Posterior cingulate gyrus (tissue), 11 donors: ENCODE measurements at regions of chr12 and their contacts with region 1.

Region 1: GRCh38 chr12:45309836-45310626 is 94.1 kb downstream of the ANO6 start:
- DNase-seq: no peak

Region 2: GRCh38 chr12:45215419-45216229 is 94.4 kb before region 1 on chr12 and contains the start of gene ANO6:
- intact Hi-C with region 1: loop called (anchors 10 kb)
- DNase-seq: peak; percentile 70 to 97 (median 81)